ENCODE measurements at regions of chr5 and their contacts with region 1.

Region 1: GRCh38 chr5:154857530-154858296 is 714 bp upstream of the CNOT8 start:
- DNase-seq: peak; percentile 82 to 95 (median 87)
- ATAC-seq: peak; percentile 86
- H3K4me3 ChIP-seq: peak overlapping the region; percentile 88
- H3K27ac ChIP-seq: peak overlapping the region; percentile 95
- H3K4me1 ChIP-seq: peaks cover 17 to 31% of the 10 kb centered on the region in 2 experiments; a peak in 4 of 5 replicates
- H3K27me3 ChIP-seq: no peaks in the 10 kb centered on the region
- CTCF ChIP-seq: peak in 1 of 3 experiments; percentile 14; a peak in 1 of 6 replicates
- EP300 ChIP-seq: no peak
- POLR2A ChIP-seq: peak; percentile 1
- RAD21 ChIP-seq: no peak

Region 2: DNA sequence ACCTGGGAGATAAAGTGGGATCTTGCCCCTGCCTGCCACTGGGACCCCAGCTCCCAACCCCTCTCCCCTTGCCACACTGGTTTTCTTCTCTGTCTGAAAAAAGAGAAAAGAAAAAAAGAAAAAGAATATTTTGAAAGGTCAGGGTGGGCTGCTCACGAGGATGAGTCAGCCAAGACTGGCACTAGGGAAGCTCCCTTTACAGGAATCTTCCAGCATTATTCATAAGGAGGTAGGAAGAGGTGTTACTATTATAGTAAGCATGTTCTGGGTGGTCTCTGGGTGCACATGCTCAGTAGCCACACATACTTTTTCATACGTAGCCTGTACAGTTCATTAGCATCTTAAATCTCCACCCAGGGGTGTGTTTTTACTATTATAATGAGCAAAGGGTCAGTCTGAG is 332.9 kb before region 1 on chr5:
- CTCF ChIA-PET with region 1: no interaction called
- POLR2A ChIA-PET with region 1: no interaction called
- in situ Hi-C with region 1: no loop called
- intact Hi-C with region 1: no loop called
- DNase-seq: no peak
- ATAC-seq: no peak
- H3K4me3 ChIP-seq: no peak overlapping the region
- H3K27ac ChIP-seq: no peak overlapping the region
- H3K4me1 ChIP-seq: peaks cover 11 to 12% of the 10 kb centered on the region in 2 experiments; a peak in 4 of 5 replicates
- H3K27me3 ChIP-seq: peaks cover 15 to 32% of the 10 kb centered on the region in 2 experiments; a peak in 4 of 5 replicates
- CTCF ChIP-seq: no peak
- EP300 ChIP-seq: no peak
- POLR2A ChIP-seq: no peak
- RAD21 ChIP-seq: no peak

Region 3: DNA sequence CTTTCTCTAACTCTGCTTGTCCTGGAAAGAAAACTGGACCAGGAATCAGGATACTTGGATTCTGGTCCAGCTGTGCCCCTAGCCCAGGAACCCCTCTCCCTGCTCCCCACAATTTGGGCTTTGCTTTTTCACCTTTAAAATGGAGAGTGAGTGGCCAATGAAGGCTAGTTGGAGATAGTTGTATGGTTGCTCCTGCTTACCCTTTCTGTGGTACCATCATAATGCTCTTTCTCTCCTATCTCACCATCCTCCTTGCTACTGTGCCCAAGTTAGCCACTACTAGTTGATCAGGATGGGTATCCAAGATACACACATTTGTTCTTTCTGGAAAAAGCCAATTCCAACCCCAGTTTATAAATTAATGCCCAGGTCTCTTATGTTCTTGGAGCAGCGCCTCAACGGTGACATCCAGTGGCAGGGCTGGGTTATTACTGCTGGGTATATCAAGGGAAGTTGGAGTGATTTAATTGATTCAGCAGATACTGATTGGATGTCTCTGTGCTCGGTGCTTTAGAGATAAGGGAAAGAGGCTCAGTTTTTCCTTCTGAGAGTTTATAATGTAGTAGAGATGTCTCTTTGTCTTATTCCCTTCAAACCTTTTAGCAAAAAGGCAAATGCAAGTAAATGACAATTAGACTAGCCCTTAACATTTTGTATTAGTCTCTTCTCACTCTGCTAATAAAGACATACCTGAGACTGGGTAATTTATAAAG is 45.9 kb before region 1 on chr5:
- CTCF ChIA-PET with region 1: no interaction called
- POLR2A ChIA-PET with region 1: no interaction called
- in situ Hi-C with region 1: no loop called
- intact Hi-C with region 1: no loop called
- DNase-seq: peak; percentile 57 to 71 (median 62)
- ATAC-seq: peak; percentile 84
- H3K4me3 ChIP-seq: no peak overlapping the region
- H3K27ac ChIP-seq: no peak overlapping the region
- H3K4me1 ChIP-seq: peaks cover 3 to 4% of the 10 kb centered on the region in 2 experiments; a peak in 3 of 5 replicates
- H3K27me3 ChIP-seq: no peaks in the 10 kb centered on the region
- CTCF ChIP-seq: peak; percentile 80 to 88 (median 82)
- EP300 ChIP-seq: no peak
- POLR2A ChIP-seq: no peak
- RAD21 ChIP-seq: peak; percentile 85

Region 4: GRCh38 chr5:154840435-154841272 is 17.1 kb before region 1 on chr5:
- CTCF ChIA-PET with region 1: no interaction called
- POLR2A ChIA-PET with region 1: interaction called, 20 read pairs
- in situ Hi-C with region 1: no loop called
- intact Hi-C with region 1: loop called (anchors 1 kb)
- DNase-seq: peak; percentile 77 to 89 (median 84)
- ATAC-seq: peak; percentile 88
- H3K4me3 ChIP-seq: no peak overlapping the region
- H3K27ac ChIP-seq: peak overlapping the region; percentile 78
- H3K4me1 ChIP-seq: peaks cover 33 to 50% of the 10 kb centered on the region in 2 experiments
- H3K27me3 ChIP-seq: no peaks in the 10 kb centered on the region
- CTCF ChIP-seq: no peak
- EP300 ChIP-seq: peak; percentile 90
- POLR2A ChIP-seq: no peak
- RAD21 ChIP-seq: peak; percentile 18 to 36; a peak in 2 of 4 replicates

Measured in K562 (cell line).